Endothelial cell of umbilical vein (primary cell): ENCODE measurements at regions of chrX and their contacts with region 1.

Region 1: GRCh38 chrX:102768987-102769761 is 48.6 kb downstream of the GPRASP3 start:
- DNase-seq: peak; percentile 88
- H3K4me3 ChIP-seq: peak overlapping the region; percentile 69 to 88 (median 69)
- H3K27ac ChIP-seq: peak overlapping the region; percentile 74
- H3K4me1 ChIP-seq: peaks cover 26% of the 10 kb centered on the region
- H3K27me3 ChIP-seq: no peaks in the 10 kb centered on the region
- CTCF ChIP-seq: no peak
- POLR2A ChIP-seq: no peak

Region 2: DNA sequence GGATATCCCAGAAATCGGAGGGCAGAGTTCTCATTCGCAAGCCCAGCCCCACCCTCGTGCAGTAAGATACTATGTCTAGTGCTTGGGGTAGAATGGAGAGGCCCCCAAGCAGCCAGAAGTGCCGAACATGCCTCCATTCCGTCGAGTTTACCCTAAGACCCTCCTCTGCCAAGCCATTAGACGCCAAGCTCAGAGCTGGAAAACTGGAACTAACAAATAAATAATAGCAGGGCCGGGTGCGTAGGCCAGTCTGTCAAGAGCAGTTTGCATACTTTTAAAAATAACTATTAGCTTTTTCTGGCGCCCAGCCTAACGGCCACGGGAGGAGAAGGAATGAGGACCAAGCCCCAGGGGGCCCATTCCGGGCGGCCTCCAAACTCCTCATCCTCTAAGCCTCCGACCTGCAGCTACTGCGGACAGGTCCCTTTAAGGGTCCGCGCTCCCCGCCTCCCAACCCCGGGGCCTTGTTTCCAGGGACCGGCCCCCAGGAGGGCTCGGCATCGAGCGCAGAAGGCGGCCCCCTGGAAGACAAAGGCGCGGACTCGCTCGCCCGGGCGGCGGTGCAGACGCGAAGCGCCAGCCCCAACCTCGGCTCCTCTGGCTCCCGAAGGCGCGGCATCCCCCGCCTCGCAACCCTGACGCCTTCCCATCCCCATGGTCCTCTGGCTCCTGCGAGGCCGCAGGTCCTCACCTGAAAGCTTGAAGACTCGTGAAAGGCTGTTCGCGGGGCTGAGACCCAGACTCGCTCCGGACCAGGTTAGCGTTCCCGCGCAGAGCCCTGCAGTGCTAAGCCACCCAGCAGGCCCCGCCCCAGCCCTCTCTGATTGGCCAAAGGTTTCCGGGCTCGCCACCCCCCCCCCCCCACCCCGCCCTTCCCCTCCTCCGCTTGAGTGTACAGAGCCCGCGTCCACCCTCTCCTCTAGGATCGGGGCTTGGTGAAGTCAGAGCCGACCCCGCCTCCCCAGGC is 252.9 kb before region 1 on chrX and contains the start of gene TMSB15A:
- CTCF ChIA-PET with region 1: no interaction called
- POLR2A ChIA-PET with region 1: no interaction called
- dilution Hi-C with region 1: no loop called
- intact Hi-C with region 1: loop called (anchors 1 kb)
- DNase-seq: peak; percentile 31
- H3K4me3 ChIP-seq: peak within 1 kb of the TSS; percentile 10 to 44 (median 33)
- H3K27ac ChIP-seq: no peak within 1 kb of the TSS
- H3K4me1 ChIP-seq: no peaks in the 10 kb centered on the region
- H3K27me3 ChIP-seq: no peaks in the 10 kb centered on the region
- CTCF ChIP-seq: no peak
- POLR2A ChIP-seq: no peak
- total RNA-seq, gene TMSB15A: 6.0 and 6.7 TPM in 2 replicates

Region 3: GRCh38 chrX:102652031-102652688 is 117.0 kb before region 1 on chrX:
- CTCF ChIA-PET with region 1: no interaction called
- POLR2A ChIA-PET with region 1: no interaction called
- dilution Hi-C with region 1: no loop called
- intact Hi-C with region 1: loop called (anchors 5 kb)
- DNase-seq: peak; percentile 18
- H3K4me3 ChIP-seq: peak overlapping the region; percentile 37 to 54 (median 45)
- H3K27ac ChIP-seq: no peak overlapping the region
- H3K4me1 ChIP-seq: no peaks in the 10 kb centered on the region
- H3K27me3 ChIP-seq: no peaks in the 10 kb centered on the region
- CTCF ChIP-seq: peak; percentile 29 to 39
- POLR2A ChIP-seq: no peak

Region 4: GRCh38 chrX:102720237-102721168 is 48.7 kb before region 1 on chrX and contains the start of gene GPRASP3:
- CTCF ChIA-PET with region 1: no interaction called
- POLR2A ChIA-PET with region 1: no interaction called
- dilution Hi-C with region 1: no loop called
- intact Hi-C with region 1: loop called (anchors 2 kb)
- DNase-seq: peak; percentile 81
- H3K4me3 ChIP-seq: peak within 1 kb of the TSS; percentile 31 to 76 (median 58)
- H3K27ac ChIP-seq: peak within 1 kb of the TSS; percentile 26
- H3K4me1 ChIP-seq: peaks cover 9% of the 10 kb centered on the region
- H3K27me3 ChIP-seq: no peaks in the 10 kb centered on the region
- CTCF ChIP-seq: no peak
- POLR2A ChIP-seq: peak; percentile 39
- total RNA-seq, gene GPRASP3: 5.1 and 7.2 TPM in 2 replicates

Region 5: GRCh38 chrX:102745857-102746584 is 23.2 kb before region 1 on chrX:
- CTCF ChIA-PET with region 1: interaction called, 5 read pairs
- POLR2A ChIA-PET with region 1: no interaction called
- dilution Hi-C with region 1: no loop called
- intact Hi-C with region 1: loop called (anchors 1 kb)
- DNase-seq: no peak
- H3K4me3 ChIP-seq: peak overlapping the region; percentile 16 to 58 (median 50)
- H3K27ac ChIP-seq: no peak overlapping the region
- H3K4me1 ChIP-seq: peaks cover 3% of the 10 kb centered on the region
- H3K27me3 ChIP-seq: no peaks in the 10 kb centered on the region
- CTCF ChIP-seq: no peak
- POLR2A ChIP-seq: no peak

Region 6: GRCh38 chrX:102808336-102808735 is 39.2 kb after region 1 on chrX:
- CTCF ChIA-PET with region 1: no interaction called
- POLR2A ChIA-PET with region 1: no interaction called
- dilution Hi-C with region 1: no loop called
- intact Hi-C with region 1: no loop called
- DNase-seq: no peak
- H3K4me3 ChIP-seq: no peak overlapping the region
- H3K27ac ChIP-seq: no peak overlapping the region
- H3K4me1 ChIP-seq: no peaks in the 10 kb centered on the region
- H3K27me3 ChIP-seq: no peaks in the 10 kb centered on the region
- CTCF ChIP-seq: no peak
- POLR2A ChIP-seq: no peak

Region 7: GRCh38 chrX:102835504-102836146 is 66.5 kb after region 1 on chrX:
- CTCF ChIA-PET with region 1: interaction called, 5 read pairs
- POLR2A ChIA-PET with region 1: no interaction called
- dilution Hi-C with region 1: no loop called
- intact Hi-C with region 1: loop called (anchors 5 kb)
- DNase-seq: peak; percentile 54
- H3K4me3 ChIP-seq: no peak overlapping the region
- H3K27ac ChIP-seq: no peak overlapping the region
- H3K4me1 ChIP-seq: peaks cover 3% of the 10 kb centered on the region
- H3K27me3 ChIP-seq: no peaks in the 10 kb centered on the region
- CTCF ChIP-seq: peak; percentile 39 to 53
- POLR2A ChIP-seq: no peak

Region 8: DNA sequence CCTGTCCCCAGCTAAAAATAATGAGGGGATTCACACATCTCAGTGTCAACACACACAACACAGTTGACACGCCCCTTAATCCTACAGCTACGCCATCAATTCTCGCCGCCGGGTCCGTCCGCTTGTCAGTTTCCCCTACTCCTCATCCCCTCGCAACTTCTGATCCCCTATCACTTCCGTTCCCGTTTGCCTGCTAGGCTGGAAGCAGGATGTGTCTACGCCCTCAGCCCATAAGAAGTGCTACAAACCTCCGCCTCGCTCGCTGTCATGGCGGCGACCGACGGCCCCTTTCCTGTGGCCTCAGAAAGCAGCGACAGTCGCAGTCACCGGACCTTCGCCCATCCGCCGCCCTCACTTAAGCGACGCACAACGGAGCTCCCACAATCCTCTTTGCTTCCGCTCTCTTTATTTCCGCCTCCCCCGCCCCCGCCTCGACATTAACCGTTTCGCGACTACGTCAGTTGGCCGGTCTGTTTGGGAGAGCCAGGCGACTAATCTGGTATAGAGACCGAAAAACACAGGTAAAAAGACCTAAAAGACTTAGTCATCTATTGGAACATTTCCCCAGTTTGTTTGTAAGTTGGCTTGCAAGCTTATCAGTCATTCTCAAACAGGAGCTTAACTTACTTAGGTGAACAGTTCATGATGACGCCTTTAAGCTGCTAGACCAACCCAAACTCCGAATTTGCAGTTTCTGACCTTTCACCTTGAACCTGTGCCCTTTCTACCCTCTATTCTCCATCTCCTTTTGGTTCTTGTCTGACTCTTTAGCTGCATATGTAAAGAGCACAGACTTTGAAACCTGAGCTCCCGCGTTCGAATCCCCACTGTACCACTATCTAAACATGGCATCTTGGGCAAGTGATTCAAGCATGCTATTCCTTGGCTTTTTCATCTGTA is 1387.7 kb after region 1 on chrX and contains the start of gene SLC25A53:
- CTCF ChIA-PET with region 1: no interaction called
- POLR2A ChIA-PET with region 1: no interaction called
- dilution Hi-C with region 1: no loop called
- intact Hi-C with region 1: loop called (anchors 5 kb)
- DNase-seq: peak; percentile 82
- H3K4me3 ChIP-seq: peak within 1 kb of the TSS; percentile 68 to 99 (median 97)
- H3K27ac ChIP-seq: peak within 1 kb of the TSS; percentile 84
- H3K4me1 ChIP-seq: peaks cover 5% of the 10 kb centered on the region
- H3K27me3 ChIP-seq: no peaks in the 10 kb centered on the region
- CTCF ChIP-seq: no peak
- POLR2A ChIP-seq: no peak
- total RNA-seq, gene SLC25A53: 5.7 and 6.3 TPM in 2 replicates